ENCODE measurements at regions of chr2 and their contacts with region 1.

Region 1: DNA sequence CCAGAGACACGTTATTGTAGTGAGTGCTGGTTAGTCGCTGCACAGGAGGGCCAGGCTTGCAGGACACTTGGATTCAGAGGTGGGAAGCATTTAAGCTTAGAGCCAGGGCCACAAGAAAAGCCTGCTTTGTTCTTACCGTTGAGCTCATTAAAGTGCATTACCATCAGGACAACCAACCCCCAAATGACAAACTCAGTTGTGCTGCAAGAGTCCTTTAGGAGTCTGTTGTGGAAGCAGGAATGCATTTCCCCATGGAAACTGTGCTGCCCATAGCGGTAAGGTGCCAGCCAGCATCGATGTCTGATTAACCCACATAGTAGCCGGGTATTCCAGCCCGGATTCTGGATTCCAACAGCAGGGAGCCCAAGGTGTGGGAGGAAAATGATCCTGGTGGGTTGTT is 23.4 kb upstream of the REEP1 start:
- DNase-seq: peak in 1 of 4 donors; percentile 26
- ATAC-seq: no peak
- H3K4me3 ChIP-seq: no peak overlapping the region
- H3K27ac ChIP-seq: no peak overlapping the region
- H3K4me1 ChIP-seq: peaks cover 14% of the 10 kb centered on the region
- H3K27me3 ChIP-seq: no peaks in the 10 kb centered on the region
- CTCF ChIP-seq: no peak
- POLR2A ChIP-seq: no peak

Region 2: DNA sequence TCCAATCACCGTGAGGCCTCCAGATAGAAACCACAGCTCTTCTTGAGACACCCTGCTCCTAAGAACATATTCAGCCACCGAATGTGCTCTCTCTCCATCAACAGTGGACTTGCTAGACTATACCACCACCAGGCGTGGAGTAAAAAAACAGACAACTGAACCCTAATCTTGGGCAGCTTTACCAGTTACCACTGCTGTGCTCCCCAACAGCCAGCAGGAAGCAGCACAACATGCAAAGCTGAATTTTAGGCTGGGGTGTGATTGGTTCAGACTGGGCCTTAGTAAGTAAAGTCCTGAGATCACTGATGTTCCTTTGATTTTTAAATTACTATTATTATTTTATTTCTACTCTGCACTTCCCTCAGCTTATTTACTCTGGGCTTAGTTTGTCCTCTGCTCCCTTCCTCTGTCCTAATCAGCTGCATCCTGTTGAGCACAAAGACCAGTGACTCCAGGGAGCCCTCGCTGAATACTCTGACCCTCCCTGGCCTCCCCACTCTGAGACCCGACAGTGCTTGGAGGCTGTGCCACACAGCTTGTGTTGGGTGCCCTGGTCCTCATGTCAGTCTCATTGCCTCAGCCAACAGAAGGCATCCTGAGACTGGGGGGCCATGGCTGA is 139.6 kb before region 1 on chr2:
- intact Hi-C with region 1: loop called (anchors 5 kb)
- DNase-seq: peak; percentile 27 to 64 (median 54)
- ATAC-seq: peak; percentile 75
- H3K4me3 ChIP-seq: no peak overlapping the region
- H3K27ac ChIP-seq: no peak overlapping the region
- H3K4me1 ChIP-seq: peaks cover 9% of the 10 kb centered on the region
- H3K27me3 ChIP-seq: no peaks in the 10 kb centered on the region
- CTCF ChIP-seq: peak; percentile 59 to 91 (median 83)
- POLR2A ChIP-seq: no peak

Region 3: DNA sequence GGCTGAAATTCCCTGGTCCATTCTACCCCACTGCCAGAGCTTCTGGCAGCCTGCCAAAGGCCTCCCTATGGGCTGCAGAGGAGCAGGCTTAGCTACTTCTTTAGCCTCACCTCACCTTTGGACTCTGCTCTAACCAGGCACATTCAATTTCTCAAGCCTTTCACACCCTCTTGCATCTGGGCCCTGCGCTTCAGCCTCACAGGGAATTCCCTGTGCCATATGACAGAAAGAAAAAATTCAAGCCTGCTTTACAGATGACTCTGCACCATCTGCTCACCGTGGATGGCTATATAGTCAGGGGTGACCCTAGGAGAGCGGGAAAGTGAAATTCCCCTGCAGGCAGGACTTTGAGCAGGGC is 85.9 kb before region 1 on chr2:
- intact Hi-C with region 1: no loop called
- DNase-seq: peak; percentile 68 to 94 (median 84)
- ATAC-seq: peak; percentile 81
- H3K4me3 ChIP-seq: no peak overlapping the region
- H3K27ac ChIP-seq: peak overlapping the region in 1 of 4 donors; percentile 15
- H3K4me1 ChIP-seq: peaks cover 12% of the 10 kb centered on the region
- H3K27me3 ChIP-seq: no peaks in the 10 kb centered on the region
- CTCF ChIP-seq: no peak
- POLR2A ChIP-seq: no peak